Activated CD4-positive, alpha-beta T cell treated with anti-CD3 and anti-CD28 coated beads, Interleukin-2, amount 10 ng/mL, durations not matched to agents 24 days and 14 days (primary cell): ENCODE measurements at regions of chr20 and their contacts with region 1.

Region 1: GRCh38 chr20:50115591-50116372 is 2.8 kb upstream of the UBE2V1 start:
- DNase-seq: peak; percentile 97
- H3K4me3 Mint-ChIP-seq: peak overlapping the region; percentile 98
- H3K27ac Mint-ChIP-seq: peak overlapping the region; percentile 85
- H3K4me1 Mint-ChIP-seq: peaks cover 47% of the 10 kb centered on the region
- H3K27me3 Mint-ChIP-seq: no peaks in the 10 kb centered on the region

Region 2: DNA sequence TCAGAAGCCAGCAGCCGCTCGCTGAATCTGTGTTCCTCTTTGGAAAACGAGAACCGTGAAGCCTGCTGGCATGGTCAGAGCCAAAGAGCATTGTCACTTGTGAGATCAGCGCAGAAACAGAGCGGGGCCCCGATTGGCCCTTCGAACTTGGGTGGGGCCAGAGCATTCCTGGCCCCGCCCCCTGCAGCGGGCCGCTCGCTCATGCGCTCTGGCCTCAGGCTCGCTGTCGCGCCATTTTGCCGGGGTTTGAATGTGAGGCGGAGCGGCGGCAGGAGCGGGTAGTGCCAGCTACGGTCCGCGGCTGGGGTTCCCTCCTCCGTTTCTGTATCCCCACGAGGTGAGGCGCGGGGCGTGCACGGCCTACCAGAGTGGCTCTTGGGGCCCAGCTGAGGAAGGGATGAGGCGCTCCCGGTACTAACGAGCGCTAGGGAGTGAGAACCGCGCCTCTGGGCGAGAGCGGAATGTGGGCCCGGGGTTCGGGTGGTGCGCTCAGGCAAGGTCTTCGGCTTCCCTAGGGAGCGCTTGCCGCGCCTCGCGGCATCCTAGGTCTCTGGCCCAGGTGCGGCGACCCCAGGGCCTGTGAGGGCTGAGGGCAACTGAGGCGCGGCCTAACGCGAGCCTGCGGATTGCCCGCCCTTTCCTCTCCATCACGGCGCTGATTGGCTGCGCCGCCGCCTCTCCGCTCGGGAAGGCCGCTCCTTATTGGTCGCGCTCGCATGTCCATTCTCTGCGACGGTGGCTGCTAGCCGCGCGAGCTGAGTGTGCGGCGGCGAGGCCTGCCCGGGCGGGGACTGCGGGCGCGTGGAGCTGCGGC is 1069.5 kb before region 1 on chr20 and contains the start of gene CSE1L:
- intact Hi-C with region 1: loop called (anchors 10 kb)
- DNase-seq: peak; percentile 99
- H3K4me3 Mint-ChIP-seq: peak within 1 kb of the TSS; percentile 99
- H3K27ac Mint-ChIP-seq: peak within 1 kb of the TSS; percentile 100
- H3K4me1 Mint-ChIP-seq: peaks cover 28% of the 10 kb centered on the region
- H3K27me3 Mint-ChIP-seq: no peaks in the 10 kb centered on the region
- total RNA-seq, gene CSE1L: 135 and 136 TPM in 2 replicates

Region 3: GRCh38 chr20:50153485-50154377 is 37.9 kb after region 1 on chr20 and contains the start of gene PEDS1:
- intact Hi-C with region 1: loop called (anchors 1 kb)
- DNase-seq: peak; percentile 96
- H3K4me3 Mint-ChIP-seq: peak within 1 kb of the TSS; percentile 91
- H3K27ac Mint-ChIP-seq: peak within 1 kb of the TSS; percentile 89
- H3K4me1 Mint-ChIP-seq: peaks cover 42% of the 10 kb centered on the region
- H3K27me3 Mint-ChIP-seq: no peaks in the 10 kb centered on the region
- total RNA-seq, gene PEDS1: 26.3 and 30.2 TPM in 2 replicates